GM10248 (cell line): ENCODE measurements at regions of chr11 and their contacts with region 1.

Region 1: GRCh38 chr11:62905927-62906531 is 15.1 kb downstream of the CHRM1 start:
- DNase-seq: peak; percentile 84
- CTCF ChIP-seq: peak; percentile 99

Region 2: DNA sequence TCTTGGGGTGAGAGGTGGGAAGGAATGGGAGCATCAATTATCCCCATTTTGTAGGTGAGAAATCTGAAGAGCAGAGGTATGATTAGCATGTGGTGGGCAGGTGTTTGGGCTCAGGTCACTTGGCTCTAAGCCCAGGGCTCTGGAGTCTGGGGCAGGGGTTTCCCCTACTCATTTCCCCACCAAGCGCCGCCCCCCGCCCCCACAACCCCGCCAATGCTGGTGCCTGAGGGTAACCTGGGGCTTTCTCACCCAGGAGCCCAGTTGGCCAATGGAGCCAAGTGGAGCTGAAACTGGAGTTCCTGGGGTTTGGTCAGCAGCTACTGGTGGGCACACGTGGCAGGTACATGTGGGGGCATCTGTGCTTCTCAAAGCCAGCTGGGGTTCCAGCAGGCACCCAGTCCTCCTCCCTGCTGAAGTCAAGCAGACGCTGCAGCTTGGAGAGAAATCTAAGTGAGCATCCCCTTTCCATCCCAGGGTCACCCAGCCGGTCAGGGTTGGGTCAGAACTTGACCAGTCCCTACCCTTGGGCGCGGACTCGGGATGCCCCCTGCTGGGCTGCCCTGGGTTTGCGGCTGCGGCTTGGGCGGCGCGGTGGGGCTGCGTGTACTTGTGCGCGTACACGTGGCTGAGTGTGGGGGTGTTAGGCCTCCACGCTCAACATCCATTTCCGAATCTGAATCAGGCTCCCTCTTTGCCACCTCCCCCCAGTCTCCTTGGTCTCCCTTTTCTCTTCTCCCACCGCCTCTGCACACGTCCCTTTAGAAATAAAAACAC is 16.8 kb after region 1 on chr11:
- CTCF ChIA-PET with region 1: interaction called, 97 read pairs
- POLR2A ChIA-PET with region 1: no interaction called
- DNase-seq: peak; percentile 76
- CTCF ChIP-seq: peak; percentile 23

Region 3: GRCh38 chr11:62999649-63000048 is 93.6 kb after region 1 on chr11:
- CTCF ChIA-PET with region 1: interaction called, 11 read pairs
- POLR2A ChIA-PET with region 1: no interaction called
- DNase-seq: no peak
- CTCF ChIP-seq: no peak

Region 4: DNA sequence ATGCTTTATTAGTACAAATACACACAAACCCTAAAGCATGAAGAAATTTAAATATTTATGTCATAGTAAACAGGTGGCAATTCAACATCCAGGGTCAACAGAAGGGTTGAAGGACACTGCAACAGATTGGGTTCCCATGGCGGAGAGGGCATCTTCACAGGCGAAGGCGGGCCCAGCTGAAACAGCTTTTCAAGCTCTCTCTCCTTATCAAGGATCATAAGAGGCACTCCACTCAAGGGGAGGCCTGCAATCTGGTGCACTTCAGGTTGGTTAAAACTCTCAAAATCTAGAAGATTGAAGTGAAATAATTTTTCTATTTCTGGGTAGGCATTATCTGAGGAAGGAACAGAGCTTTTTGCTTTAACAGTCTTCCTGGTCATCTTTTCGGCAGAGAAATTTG is 126.4 kb after region 1 on chr11:
- CTCF ChIA-PET with region 1: interaction called, 69 read pairs
- POLR2A ChIA-PET with region 1: no interaction called
- DNase-seq: no peak
- CTCF ChIP-seq: no peak